GM12878 (cell line): ENCODE measurements at regions of chr5 and their contacts with region 1.

Region 1: GRCh38 chr5:143213851-143214363 is 189.6 kb downstream of the NR3C1 start:
- DNase-seq: peak; percentile 97
- ATAC-seq: peak; percentile 68
- H3K4me3 ChIP-seq: peak overlapping the region; percentile 6; the same call in 1 of the 2 replicates
- H3K27ac ChIP-seq: peak overlapping the region; percentile 100
- H3K4me1 ChIP-seq: peaks cover 76% of the 10 kb centered on the region
- H3K27me3 ChIP-seq: no peaks in the 10 kb centered on the region
- CTCF ChIP-seq: peak; percentile 38 to 61 (median 47); a peak in 5 of 6 replicates
- EP300 ChIP-seq: peak; percentile 73 to 82
- POLR2A ChIP-seq: peak; percentile 45
- RAD21 ChIP-seq: peak; percentile 76

Region 2: DNA sequence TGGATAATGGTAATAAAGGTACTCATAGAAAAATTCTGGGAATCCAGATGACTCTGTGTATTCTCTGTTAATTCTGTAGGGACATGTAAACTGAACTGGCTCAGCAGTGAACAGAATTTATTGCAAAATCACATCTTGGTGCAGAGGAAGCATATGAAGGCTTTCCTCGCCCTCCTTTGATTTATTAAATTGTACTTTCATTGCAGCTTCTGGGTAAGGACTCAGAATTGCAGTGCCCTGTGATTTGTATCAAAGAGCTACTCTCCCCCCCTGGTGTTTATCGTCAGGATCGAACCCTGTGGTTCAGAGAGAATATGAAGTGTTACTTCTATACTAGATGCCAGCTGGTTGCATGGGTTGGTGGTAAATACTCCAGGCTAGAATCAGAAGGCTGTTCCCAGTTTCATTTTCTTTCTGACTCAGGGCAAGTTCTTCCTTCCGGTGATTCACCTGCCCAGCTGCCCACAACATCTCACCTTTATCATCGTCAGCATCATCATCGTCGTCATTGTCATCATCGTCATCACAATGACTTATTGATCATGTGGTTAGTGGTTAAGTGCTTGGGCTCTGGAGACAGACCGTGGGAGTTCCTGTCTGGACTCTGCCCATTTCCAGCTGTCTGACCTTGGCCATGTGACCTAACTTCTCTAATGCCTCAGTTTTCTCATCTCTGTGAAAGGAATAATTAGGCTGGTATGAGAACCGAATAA is 204.9 kb before region 1 on chr5:
- CTCF ChIA-PET with region 1: interaction called, 24 read pairs
- POLR2A ChIA-PET with region 1: interaction called, 20 read pairs
- RAD21 ChIA-PET with region 1: interaction called, 52 read pairs
- SMC1A ChIA-PET with region 1: interaction called, 87 read pairs
- in situ Hi-C with region 1: no loop called
- intact Hi-C with region 1: no loop called
- DNase-seq: peak; percentile 98
- ATAC-seq: peak; percentile 90
- H3K4me3 ChIP-seq: no peak overlapping the region
- H3K27ac ChIP-seq: peak overlapping the region; percentile 47; the same call in 1 of the 2 replicates
- H3K4me1 ChIP-seq: peaks cover 27% of the 10 kb centered on the region
- H3K27me3 ChIP-seq: no peaks in the 10 kb centered on the region
- CTCF ChIP-seq: peak; percentile 13 to 25 (median 25); a peak in 2 of 6 replicates
- EP300 ChIP-seq: peak; percentile 100
- POLR2A ChIP-seq: no peak
- RAD21 ChIP-seq: 0 out of 2 replicates have a peak, but pooled peaks have one; percentile 30

Region 3: GRCh38 chr5:143057580-143057999 is 156.3 kb before region 1 on chr5:
- CTCF ChIA-PET with region 1: interaction called, 4 read pairs
- POLR2A ChIA-PET with region 1: interaction called, 16 read pairs
- RAD21 ChIA-PET with region 1: interaction called, 20 read pairs
- SMC1A ChIA-PET with region 1: interaction called, 50 read pairs
- in situ Hi-C with region 1: loop called (anchors 5 kb)
- intact Hi-C with region 1: no loop called
- DNase-seq: peak; percentile 85
- ATAC-seq: peak; percentile 59
- H3K4me3 ChIP-seq: peak overlapping the region; percentile 77
- H3K27ac ChIP-seq: peak overlapping the region; percentile 100
- H3K4me1 ChIP-seq: peaks cover 56% of the 10 kb centered on the region
- H3K27me3 ChIP-seq: no peaks in the 10 kb centered on the region
- CTCF ChIP-seq: no peak
- EP300 ChIP-seq: peak; percentile 77 to 89; a peak in 3 of 4 replicates
- POLR2A ChIP-seq: peak; percentile 54; the same call in 1 of the 2 replicates
- RAD21 ChIP-seq: peak; percentile 36; the same call in 1 of the 2 replicates